HEK293 (cell line): ENCODE measurements at regions of chr16 and their contacts with region 1.

Region 1: DNA sequence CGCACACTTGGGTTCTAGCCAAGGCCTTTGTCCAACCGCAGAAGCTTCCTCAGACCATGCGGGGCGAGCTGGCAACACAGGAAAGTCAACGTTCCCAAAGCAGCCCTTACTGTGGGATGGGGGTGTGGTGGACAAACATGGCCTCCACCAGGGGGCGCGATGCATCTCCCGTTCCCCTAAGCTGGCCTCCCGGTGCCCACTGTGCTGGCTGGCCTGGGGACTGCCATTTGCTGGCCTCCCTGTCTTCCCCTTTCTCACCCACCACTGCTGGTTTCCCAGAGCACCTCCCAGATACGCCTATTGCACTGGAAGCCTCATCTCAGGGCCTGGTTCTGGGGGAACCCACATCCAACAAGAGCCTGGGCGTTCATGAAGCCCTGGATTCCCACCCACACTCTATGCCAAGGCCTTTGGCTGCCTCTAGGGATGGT is 145.3 kb downstream of the IRF8 start:
- H3K4me3 ChIP-seq: no peak overlapping the region
- H3K27ac ChIP-seq: no peak overlapping the region
- H3K4me1 ChIP-seq: no peaks in the 10 kb centered on the region
- CTCF ChIP-seq: peak; percentile 76

Region 2: DNA sequence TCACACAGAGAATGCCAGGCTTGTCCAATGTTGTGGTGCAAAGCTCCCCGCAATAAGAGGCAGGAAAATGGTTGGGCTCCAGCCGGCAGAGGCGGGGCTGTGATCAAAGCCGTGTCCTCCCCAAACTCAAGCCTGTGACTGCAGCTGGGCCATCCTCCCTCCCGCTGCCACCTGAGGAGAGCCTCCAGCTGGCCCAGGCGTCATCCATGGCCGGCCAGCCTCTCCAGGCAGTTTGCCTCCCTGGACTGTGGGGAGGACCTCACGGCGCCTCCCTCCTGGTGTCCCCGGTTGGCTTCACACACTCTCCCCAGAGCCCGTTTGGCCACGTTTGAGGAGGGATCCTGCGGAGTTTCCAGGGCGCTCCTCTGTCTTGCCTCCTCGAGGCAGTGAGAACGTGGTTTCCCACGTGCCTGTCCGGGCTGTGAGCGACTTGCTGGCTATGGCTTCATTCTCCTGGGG is 11.2 kb before region 1 on chr16:
- CTCF ChIA-PET with region 1: interaction called, 10 read pairs
- POLR2A ChIA-PET with region 1: no interaction called
- H3K4me3 ChIP-seq: no peak overlapping the region
- H3K27ac ChIP-seq: no peak overlapping the region
- H3K4me1 ChIP-seq: peaks cover 8% of the 10 kb centered on the region; the same call in 1 of the 2 replicates
- CTCF ChIP-seq: no peak

Region 3: GRCh38 chr16:86129541-86129940 is 85.3 kb after region 1 on chr16:
- CTCF ChIA-PET with region 1: no interaction called
- POLR2A ChIA-PET with region 1: no interaction called
- H3K4me3 ChIP-seq: no peak overlapping the region
- H3K27ac ChIP-seq: no peak overlapping the region
- H3K4me1 ChIP-seq: no peaks in the 10 kb centered on the region; the same call in 1 of the 2 replicates
- CTCF ChIP-seq: no peak